GM12878 (cell line): ENCODE measurements at regions of chr16 and their contacts with region 1.

Region 1: DNA sequence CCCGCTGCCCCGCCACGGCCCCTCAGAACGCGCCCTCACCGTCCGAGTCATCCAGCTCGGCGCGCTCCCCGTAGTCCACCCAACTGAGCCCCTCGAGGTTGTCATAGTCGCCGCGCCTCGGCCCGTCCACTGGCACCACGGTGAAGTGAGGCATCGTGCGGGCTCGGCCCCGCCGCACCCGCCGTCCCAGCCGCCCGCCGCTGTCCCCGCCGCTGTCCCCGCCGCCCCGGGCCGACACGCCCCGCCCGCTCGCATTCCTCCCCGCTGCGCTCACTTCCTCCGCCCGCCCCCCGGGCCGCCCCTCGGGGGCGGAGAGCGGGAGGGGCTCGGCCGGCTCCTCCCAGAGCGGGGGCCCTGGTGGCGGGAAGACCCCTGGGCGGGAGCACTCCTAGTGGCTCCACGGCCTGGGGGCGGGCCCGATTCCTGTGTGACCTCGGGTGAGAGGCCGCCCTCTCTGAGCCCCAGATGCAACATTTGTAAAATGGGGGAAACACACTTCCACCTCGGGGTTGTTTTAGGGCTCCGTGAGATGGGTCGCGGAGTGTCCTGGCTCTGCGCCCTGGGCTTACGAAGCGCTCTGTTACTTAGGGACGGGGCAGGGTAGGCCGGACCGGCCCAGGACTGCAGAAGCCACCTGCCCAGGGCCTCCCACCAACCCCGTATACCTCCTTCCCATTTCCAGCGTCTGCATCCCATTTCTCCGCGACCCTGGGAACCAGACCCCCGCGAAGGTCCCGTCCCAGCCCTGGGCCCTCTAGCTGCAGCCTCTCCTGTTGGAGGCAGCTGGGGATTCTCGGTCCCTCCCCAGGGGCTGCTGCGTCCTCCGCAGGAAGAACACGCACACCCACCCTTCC is at the start of gene SLC12A4:
- DNase-seq: no peak
- ATAC-seq: peak; percentile 88
- H3K4me3 ChIP-seq: peak within 1 kb of the TSS; percentile 96
- H3K27ac ChIP-seq: peak within 1 kb of the TSS; percentile 76
- H3K4me1 ChIP-seq: peaks cover 21% of the 10 kb centered on the region
- H3K27me3 ChIP-seq: no peaks in the 10 kb centered on the region
- CTCF ChIP-seq: no peak
- EP300 ChIP-seq: no peak
- POLR2A ChIP-seq: peak; percentile 76
- RAD21 ChIP-seq: no peak
- polyA plus RNA-seq, gene SLC12A4: 0.95 to 1.7 TPM

Region 2: GRCh38 chr16:67917852-67918236 is 50.8 kb before region 1 on chr16:
- CTCF ChIA-PET with region 1: no interaction called
- POLR2A ChIA-PET with region 1: no interaction called
- RAD21 ChIA-PET with region 1: no interaction called
- SMC1A ChIA-PET with region 1: no interaction called
- in situ Hi-C with region 1: no loop called
- intact Hi-C with region 1: no loop called
- DNase-seq: no peak
- ATAC-seq: peak; percentile 33; the same call in 1 of the 3 replicates
- H3K4me3 ChIP-seq: no peak overlapping the region
- H3K27ac ChIP-seq: no peak overlapping the region
- H3K4me1 ChIP-seq: no peaks in the 10 kb centered on the region
- H3K27me3 ChIP-seq: no peaks in the 10 kb centered on the region
- CTCF ChIP-seq: no peak
- EP300 ChIP-seq: no peak
- POLR2A ChIP-seq: no peak
- RAD21 ChIP-seq: no peak

Region 3: DNA sequence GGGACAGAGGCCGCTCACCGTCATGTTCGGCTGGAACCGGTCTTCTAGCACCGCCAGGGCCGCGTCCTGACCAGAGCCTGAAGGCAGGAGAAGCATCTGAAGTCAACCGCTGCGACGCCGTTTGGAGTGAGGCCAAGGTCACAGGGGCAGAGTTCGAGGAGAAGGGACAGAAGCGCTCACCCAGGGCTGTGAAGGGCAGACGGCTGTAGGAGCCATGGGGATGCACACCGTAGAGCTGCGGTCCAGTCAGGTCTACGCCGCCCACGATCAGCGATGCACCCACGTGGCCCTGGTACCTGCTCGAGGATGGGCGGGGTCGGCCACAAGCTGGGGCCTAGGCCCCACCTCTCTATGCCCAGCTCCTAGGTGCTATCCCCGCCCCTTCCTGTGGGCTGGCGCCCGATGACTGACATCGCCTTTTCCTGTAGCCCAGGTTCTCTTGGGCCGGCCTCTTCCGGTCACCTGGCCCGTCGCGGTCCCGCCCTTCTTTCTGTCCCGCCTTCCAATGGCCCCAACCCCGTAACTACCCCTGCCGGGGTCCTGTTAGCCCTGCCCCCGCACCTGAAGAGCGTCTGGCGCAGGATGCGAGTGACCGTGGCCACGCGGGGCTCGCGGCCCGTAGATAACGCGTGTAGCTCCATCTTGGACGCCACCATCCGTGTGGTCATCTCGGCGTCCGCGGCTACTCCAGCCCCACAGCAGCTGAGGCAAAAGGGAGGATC is 33.1 kb before region 1 on chr16:
- CTCF ChIA-PET with region 1: interaction called, 7 read pairs
- POLR2A ChIA-PET with region 1: interaction called, 16 read pairs
- RAD21 ChIA-PET with region 1: interaction called, 10 read pairs
- SMC1A ChIA-PET with region 1: interaction called, 4 read pairs
- in situ Hi-C with region 1: no loop called
- intact Hi-C with region 1: no loop called
- DNase-seq: peak; percentile 84
- ATAC-seq: peak; percentile 94
- H3K4me3 ChIP-seq: peak overlapping the region; percentile 89
- H3K27ac ChIP-seq: peak overlapping the region; percentile 98
- H3K4me1 ChIP-seq: peaks cover 12% of the 10 kb centered on the region
- H3K27me3 ChIP-seq: no peaks in the 10 kb centered on the region
- CTCF ChIP-seq: no peak
- EP300 ChIP-seq: no peak
- POLR2A ChIP-seq: peak; percentile 91
- RAD21 ChIP-seq: no peak

Region 4: GRCh38 chr16:67979955-67980678 is 11.5 kb after region 1 on chr16 and contains the start of gene DPEP3:
- CTCF ChIA-PET with region 1: interaction called, 4 read pairs
- POLR2A ChIA-PET with region 1: interaction called, 5 read pairs
- RAD21 ChIA-PET with region 1: interaction called, 4 read pairs
- SMC1A ChIA-PET with region 1: interaction called, 10 read pairs
- in situ Hi-C with region 1: no loop called
- intact Hi-C with region 1: loop called (anchors 2 kb)
- DNase-seq: no peak
- ATAC-seq: no peak
- H3K4me3 ChIP-seq: no peak within 1 kb of the TSS
- H3K27ac ChIP-seq: no peak within 1 kb of the TSS
- H3K4me1 ChIP-seq: peaks cover 28% of the 10 kb centered on the region
- H3K27me3 ChIP-seq: no peaks in the 10 kb centered on the region; a peak in 1 of 4 replicates
- CTCF ChIP-seq: 0 out of 6 replicates have a peak, but pooled peaks of 1 of the 3 experiments have one; percentile 11
- EP300 ChIP-seq: no peak
- POLR2A ChIP-seq: no peak
- RAD21 ChIP-seq: no peak
- polyA plus RNA-seq, gene DPEP3: not detected

Region 5: DNA sequence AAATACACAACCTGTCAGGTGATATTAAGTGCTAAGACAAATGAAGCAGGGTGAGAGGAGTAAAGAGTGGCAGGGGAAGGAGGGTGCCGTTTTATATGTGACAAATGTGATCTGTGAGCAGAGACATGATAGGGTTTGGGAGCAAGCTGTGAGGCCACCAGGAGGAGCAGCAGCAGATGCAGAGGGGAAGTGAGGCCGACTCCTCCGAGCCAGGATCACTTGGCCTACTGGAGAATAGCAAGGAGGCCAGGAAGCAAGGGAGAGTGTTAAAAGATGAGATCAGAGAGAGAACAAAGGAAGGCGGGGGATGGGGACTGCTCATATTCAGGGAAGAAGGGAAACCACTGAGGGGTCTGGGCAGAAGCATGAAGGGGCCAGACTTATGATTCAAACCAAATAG is 1004.1 kb after region 1 on chr16:
- CTCF ChIA-PET with region 1: no interaction called
- POLR2A ChIA-PET with region 1: no interaction called
- RAD21 ChIA-PET with region 1: no interaction called
- SMC1A ChIA-PET with region 1: no interaction called
- in situ Hi-C with region 1: no loop called
- intact Hi-C with region 1: no loop called
- DNase-seq: no peak
- ATAC-seq: no peak
- H3K4me3 ChIP-seq: no peak overlapping the region
- H3K27ac ChIP-seq: no peak overlapping the region
- H3K4me1 ChIP-seq: no peaks in the 10 kb centered on the region
- H3K27me3 ChIP-seq: no peaks in the 10 kb centered on the region
- CTCF ChIP-seq: no peak
- EP300 ChIP-seq: no peak
- POLR2A ChIP-seq: no peak
- RAD21 ChIP-seq: no peak